Activated CD8-positive, alpha-beta T cell treated with anti-CD3 and anti-CD28 coated beads for 36 hours (primary cell): ENCODE measurements at regions of chr11 and their contacts with region 1.

Region 1: GRCh38 chr11:47847892-47848635 is at the start of gene NUP160:
- DNase-seq: peak; percentile 92
- ATAC-seq: peak; percentile 88
- H3K4me3 Mint-ChIP-seq: peak within 1 kb of the TSS; percentile 98
- H3K27ac Mint-ChIP-seq: peak within 1 kb of the TSS; percentile 99
- H3K4me1 Mint-ChIP-seq: peaks cover 33% of the 10 kb centered on the region
- H3K27me3 Mint-ChIP-seq: no peaks in the 10 kb centered on the region
- CTCF ChIP-seq: no peak
- total RNA-seq, gene NUP160: 76.4 to 77.0 TPM

Region 2: GRCh38 chr11:47778878-47779483 is 69.1 kb before region 1 on chr11:
- CTCF ChIA-PET with region 1: no interaction called
- POLR2A ChIA-PET with region 1: no interaction called
- intact Hi-C with region 1: no loop called
- DNase-seq: no peak
- ATAC-seq: no peak
- H3K4me3 Mint-ChIP-seq: no peak overlapping the region
- H3K27ac Mint-ChIP-seq: no peak overlapping the region
- H3K4me1 Mint-ChIP-seq: no peaks in the 10 kb centered on the region
- H3K27me3 Mint-ChIP-seq: no peaks in the 10 kb centered on the region
- CTCF ChIP-seq: no peak

Region 3: GRCh38 chr11:47837292-47837691 is 10.8 kb before region 1 on chr11:
- CTCF ChIA-PET with region 1: interaction called, 5 read pairs
- POLR2A ChIA-PET with region 1: interaction called, 12 read pairs
- intact Hi-C with region 1: no loop called
- DNase-seq: no peak
- ATAC-seq: no peak
- H3K4me3 Mint-ChIP-seq: no peak overlapping the region
- H3K27ac Mint-ChIP-seq: no peak overlapping the region
- H3K4me1 Mint-ChIP-seq: peaks cover 3% of the 10 kb centered on the region
- H3K27me3 Mint-ChIP-seq: no peaks in the 10 kb centered on the region
- CTCF ChIP-seq: no peak

Region 4: GRCh38 chr11:47863189-47863892 is 15.3 kb after region 1 on chr11:
- CTCF ChIA-PET with region 1: interaction called, 21 read pairs
- POLR2A ChIA-PET with region 1: interaction called, 3 read pairs
- intact Hi-C with region 1: no loop called
- DNase-seq: no peak
- ATAC-seq: peak; percentile 34
- H3K4me3 Mint-ChIP-seq: no peak overlapping the region
- H3K27ac Mint-ChIP-seq: no peak overlapping the region
- H3K4me1 Mint-ChIP-seq: peaks cover 30% of the 10 kb centered on the region
- H3K27me3 Mint-ChIP-seq: no peaks in the 10 kb centered on the region
- CTCF ChIP-seq: no peak